Activated CD8-positive, alpha-beta T cell treated with anti-CD3 and anti-CD28 coated beads for 36 hours (primary cell): ENCODE measurements at regions of chr2 and their contacts with region 1.

Region 1: DNA sequence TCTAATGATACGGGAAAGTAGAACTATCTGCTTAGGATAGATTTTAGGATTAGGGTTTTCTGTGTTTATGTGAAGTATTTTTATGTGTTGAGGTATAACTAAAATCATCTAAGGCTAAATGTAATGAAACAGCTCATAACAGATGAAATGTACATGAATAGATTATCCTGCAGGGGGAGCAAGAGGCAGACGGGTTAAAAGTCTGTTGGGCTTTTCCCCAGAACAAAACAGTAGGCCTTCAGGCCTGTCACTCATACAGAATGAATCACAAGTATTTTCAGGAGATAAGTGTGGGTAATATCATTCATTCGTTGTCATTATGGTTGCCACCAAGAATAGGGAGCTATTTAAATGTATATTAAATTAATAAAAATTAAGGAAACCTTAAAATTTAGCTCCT is 107.9 kb upstream of the IL1R2 start:
- DNase-seq: peak; percentile 48
- ATAC-seq: peak; percentile 97
- H3K4me3 Mint-ChIP-seq: no peak overlapping the region
- H3K27ac Mint-ChIP-seq: no peak overlapping the region
- H3K4me1 Mint-ChIP-seq: peaks cover 7% of the 10 kb centered on the region
- H3K27me3 Mint-ChIP-seq: no peaks in the 10 kb centered on the region
- CTCF ChIP-seq: peak; percentile 58

Region 2: GRCh38 chr2:101864426-101864825 is 19.4 kb before region 1 on chr2:
- CTCF ChIA-PET with region 1: interaction called, 24 read pairs
- POLR2A ChIA-PET with region 1: no interaction called
- intact Hi-C with region 1: no loop called
- DNase-seq: no peak
- ATAC-seq: no peak
- H3K4me3 Mint-ChIP-seq: no peak overlapping the region
- H3K27ac Mint-ChIP-seq: no peak overlapping the region
- H3K4me1 Mint-ChIP-seq: peaks cover 5% of the 10 kb centered on the region
- H3K27me3 Mint-ChIP-seq: no peaks in the 10 kb centered on the region
- CTCF ChIP-seq: no peak

Region 3: DNA sequence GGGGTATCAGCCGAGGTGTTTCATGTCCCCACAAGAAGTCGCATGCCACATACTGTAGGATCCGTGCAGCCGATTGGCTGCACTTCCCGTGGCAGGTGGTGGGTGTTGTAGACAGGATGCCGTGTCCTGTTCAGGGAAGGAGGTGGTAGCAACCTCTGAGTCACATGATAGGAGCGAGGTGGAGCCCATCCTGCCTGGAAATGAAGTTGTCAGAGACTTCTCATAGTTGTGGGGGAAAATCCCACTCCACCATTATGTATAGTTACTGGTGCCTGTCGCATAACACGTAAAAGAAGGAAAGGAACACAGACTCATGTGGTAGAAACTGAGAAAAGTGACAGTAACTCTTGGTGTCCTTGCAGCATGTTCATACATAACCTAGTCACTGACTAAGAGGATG is 16.5 kb after region 1 on chr2:
- CTCF ChIA-PET with region 1: interaction called, 31 read pairs
- POLR2A ChIA-PET with region 1: no interaction called
- intact Hi-C with region 1: no loop called
- DNase-seq: peak; percentile 42
- ATAC-seq: peak; percentile 92
- H3K4me3 Mint-ChIP-seq: no peak overlapping the region
- H3K27ac Mint-ChIP-seq: no peak overlapping the region
- H3K4me1 Mint-ChIP-seq: peaks cover 11% of the 10 kb centered on the region
- H3K27me3 Mint-ChIP-seq: peaks cover 10% of the 10 kb centered on the region
- CTCF ChIP-seq: no peak

Region 4: GRCh38 chr2:101998896-101999789 is 115.3 kb after region 1 on chr2:
- CTCF ChIA-PET with region 1: interaction called, 22 read pairs
- POLR2A ChIA-PET with region 1: no interaction called
- intact Hi-C with region 1: loop called (anchors 10 kb)
- DNase-seq: peak; percentile 41
- ATAC-seq: peak; percentile 66
- H3K4me3 Mint-ChIP-seq: peak overlapping the region; percentile 8
- H3K27ac Mint-ChIP-seq: peak overlapping the region; percentile 67
- H3K4me1 Mint-ChIP-seq: peaks cover 25% of the 10 kb centered on the region
- H3K27me3 Mint-ChIP-seq: no peaks in the 10 kb centered on the region
- CTCF ChIP-seq: no peak